MCF 10A (cell line): ENCODE measurements at regions of chr6 and their contacts with region 1.

Region 1: GRCh38 chr6:149934249-149935156 is 7.3 kb upstream of the ULBP2 start:
- DNase-seq: peak; percentile 74
- H3K4me3 Mint-ChIP-seq: no peak overlapping the region
- H3K27ac Mint-ChIP-seq: no peak overlapping the region
- H3K4me1 Mint-ChIP-seq: peaks cover 23% of the 10 kb centered on the region
- H3K27me3 Mint-ChIP-seq: peaks cover 22% of the 10 kb centered on the region
- CTCF ChIP-seq: peak; percentile 67

Region 2: DNA sequence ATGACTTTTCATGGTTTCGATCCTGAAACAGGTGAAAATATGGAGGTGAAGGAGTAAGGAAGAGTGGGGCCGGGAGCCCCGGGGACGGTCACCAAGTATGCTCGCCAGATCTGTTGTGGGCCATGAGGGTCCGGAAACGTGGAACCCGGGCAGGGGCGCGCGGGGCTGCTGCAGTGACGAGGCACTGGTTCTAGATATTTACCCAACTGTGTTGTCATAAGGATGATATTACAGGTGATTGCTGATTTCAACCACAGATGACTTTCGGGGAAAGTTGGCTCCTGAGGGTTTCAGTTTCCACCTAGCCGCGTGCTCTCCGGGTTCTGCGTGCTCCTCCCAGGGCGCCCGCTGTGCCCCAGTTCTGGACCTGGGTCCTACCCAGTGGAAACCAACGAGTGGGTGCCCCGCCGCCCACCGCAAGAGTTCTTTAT is 23.8 kb before region 1 on chr6:
- CTCF ChIA-PET with region 1: no interaction called
- POLR2A ChIA-PET with region 1: no interaction called
- intact Hi-C with region 1: no loop called
- DNase-seq: no peak
- H3K4me3 Mint-ChIP-seq: no peak overlapping the region
- H3K27ac Mint-ChIP-seq: no peak overlapping the region
- H3K4me1 Mint-ChIP-seq: peaks cover 5% of the 10 kb centered on the region
- H3K27me3 Mint-ChIP-seq: no peaks in the 10 kb centered on the region
- CTCF ChIP-seq: no peak

Region 3: GRCh38 chr6:150068720-150069648 is 134.5 kb after region 1 on chr6 and contains the start of gene ULBP3:
- CTCF ChIA-PET with region 1: interaction called, 3 read pairs
- POLR2A ChIA-PET with region 1: no interaction called
- intact Hi-C with region 1: loop called (anchors 1 kb)
- DNase-seq: peak; percentile 98
- H3K4me3 Mint-ChIP-seq: peak within 1 kb of the TSS; percentile 77
- H3K27ac Mint-ChIP-seq: no peak within 1 kb of the TSS
- H3K4me1 Mint-ChIP-seq: peaks cover 28% of the 10 kb centered on the region
- H3K27me3 Mint-ChIP-seq: no peaks in the 10 kb centered on the region
- CTCF ChIP-seq: peak; percentile 34
- total RNA-seq, gene ULBP3: 4.9 and 6.3 TPM in 2 replicates

Region 4: DNA sequence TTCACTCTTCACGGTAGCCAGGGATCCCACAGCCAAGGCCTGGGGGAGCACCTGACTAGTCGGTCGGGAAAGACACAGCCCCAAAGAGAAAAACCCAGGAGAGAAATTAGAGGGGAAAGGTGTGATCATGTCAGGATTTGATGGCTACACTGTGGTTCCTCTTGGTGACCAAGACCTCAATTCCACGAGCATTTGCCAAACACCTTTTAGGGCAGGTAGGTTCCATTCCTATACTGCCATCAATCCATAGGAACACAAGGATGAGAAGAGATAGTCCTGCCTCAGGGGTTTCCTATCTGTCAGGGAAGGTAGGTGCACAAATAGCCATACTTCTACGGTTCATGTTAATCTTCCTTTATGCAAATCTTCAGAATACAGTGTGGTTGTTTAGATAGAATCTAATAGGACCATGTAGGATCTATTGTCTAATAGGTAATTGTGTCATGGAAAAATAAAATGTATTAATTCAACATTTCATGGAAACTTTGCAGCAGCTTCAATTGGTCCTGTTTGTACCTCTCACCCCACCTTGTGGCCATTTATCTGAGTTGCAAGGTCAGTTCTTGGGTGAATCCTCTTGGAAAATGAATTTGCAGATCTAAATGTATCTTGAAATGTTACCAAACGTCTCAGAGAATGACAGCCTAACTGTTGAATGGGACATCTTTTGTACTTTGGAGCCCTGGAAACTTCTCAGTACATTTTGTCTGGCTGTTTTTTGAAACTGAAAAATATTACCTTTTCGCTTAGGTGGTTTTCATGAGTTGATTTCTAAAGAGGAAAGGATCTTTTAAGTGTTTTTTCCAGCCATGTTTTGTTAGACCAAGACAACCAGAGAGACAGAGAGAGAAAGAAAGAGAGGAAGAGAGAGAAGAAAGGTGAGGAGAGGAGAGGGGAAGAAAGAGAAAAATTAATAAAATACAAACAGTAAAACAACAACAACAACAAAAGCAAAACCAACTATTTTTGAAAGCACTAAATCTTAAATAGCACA is 400.6 kb after region 1 on chr6:
- CTCF ChIA-PET with region 1: no interaction called
- POLR2A ChIA-PET with region 1: no interaction called
- intact Hi-C with region 1: loop called (anchors 5 kb)
- DNase-seq: peak; percentile 76
- H3K4me3 Mint-ChIP-seq: no peak overlapping the region
- H3K27ac Mint-ChIP-seq: peak overlapping the region; percentile 4
- H3K4me1 Mint-ChIP-seq: peaks cover 18% of the 10 kb centered on the region
- H3K27me3 Mint-ChIP-seq: no peaks in the 10 kb centered on the region
- CTCF ChIP-seq: peak; percentile 82